ENCODE measurements at regions of chr13 and their contacts with region 1.

Region 1: GRCh38 chr13:106536244-106537034 is 977 bp upstream of the EFNB2 start:
- DNase-seq: peak; percentile 88 to 94
- ATAC-seq: peak; percentile 62 to 79 (median 68)
- H3K4me3 ChIP-seq: peak overlapping the region; percentile 75
- H3K27ac ChIP-seq: peak overlapping the region; percentile 78
- H3K4me1 ChIP-seq: no peaks in the 10 kb centered on the region
- H3K27me3 ChIP-seq: no peaks in the 10 kb centered on the region
- CTCF ChIP-seq: peak; percentile 99

Region 2: DNA sequence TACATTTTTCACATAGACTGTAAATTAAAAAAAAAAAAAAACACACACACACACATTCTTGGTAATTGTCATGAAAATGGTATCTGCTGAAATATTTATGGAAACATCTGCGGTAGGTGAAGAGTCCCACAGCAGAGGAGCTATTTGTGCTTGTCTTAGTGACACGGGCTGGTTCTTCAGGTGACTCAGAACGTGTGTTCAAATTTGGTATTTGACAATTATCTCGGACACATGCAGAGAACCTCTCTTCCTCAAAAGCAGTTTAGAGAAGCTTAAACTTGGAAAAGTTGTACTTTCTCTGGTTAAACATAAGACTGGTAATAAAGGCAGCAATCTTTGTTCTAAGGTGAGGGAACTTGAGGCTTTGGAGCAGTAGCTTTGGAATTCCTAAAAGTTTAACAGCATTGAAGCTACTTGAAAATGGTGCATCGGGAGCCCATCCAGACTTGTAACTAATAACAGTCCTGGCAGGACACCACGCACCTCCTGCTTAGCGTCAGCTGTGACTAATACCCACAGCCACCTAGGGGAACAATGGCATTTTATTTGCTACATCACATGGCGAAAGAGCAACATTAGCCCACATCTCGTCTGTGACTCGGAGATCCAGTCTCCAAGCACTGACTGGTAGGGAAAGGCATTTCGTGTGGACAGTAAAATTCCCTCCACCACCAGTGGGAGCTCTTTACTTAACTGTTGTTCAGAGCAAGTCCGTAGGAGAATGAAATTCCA is 1965.1 kb before region 1 on chr13:
- intact Hi-C with region 1: loop called (anchors 5 to 10 kb)
- DNase-seq: peak; percentile 28 to 56
- ATAC-seq: peak; percentile 86 to 99 (median 98)
- H3K4me3 ChIP-seq: no peak overlapping the region
- H3K27ac ChIP-seq: peak overlapping the region; percentile 2
- H3K4me1 ChIP-seq: peaks cover 4% of the 10 kb centered on the region
- H3K27me3 ChIP-seq: no peaks in the 10 kb centered on the region
- CTCF ChIP-seq: peak; percentile 65

Region 3: GRCh38 chr13:105406551-105406950 is 1129.9 kb before region 1 on chr13:
- intact Hi-C with region 1: loop called in 1 of 2 experiments (anchors 10 kb)
- DNase-seq: no peak
- ATAC-seq: no peak
- H3K4me3 ChIP-seq: no peak overlapping the region
- H3K27ac ChIP-seq: no peak overlapping the region
- H3K4me1 ChIP-seq: no peaks in the 10 kb centered on the region
- H3K27me3 ChIP-seq: no peaks in the 10 kb centered on the region
- CTCF ChIP-seq: no peak

Region 4: DNA sequence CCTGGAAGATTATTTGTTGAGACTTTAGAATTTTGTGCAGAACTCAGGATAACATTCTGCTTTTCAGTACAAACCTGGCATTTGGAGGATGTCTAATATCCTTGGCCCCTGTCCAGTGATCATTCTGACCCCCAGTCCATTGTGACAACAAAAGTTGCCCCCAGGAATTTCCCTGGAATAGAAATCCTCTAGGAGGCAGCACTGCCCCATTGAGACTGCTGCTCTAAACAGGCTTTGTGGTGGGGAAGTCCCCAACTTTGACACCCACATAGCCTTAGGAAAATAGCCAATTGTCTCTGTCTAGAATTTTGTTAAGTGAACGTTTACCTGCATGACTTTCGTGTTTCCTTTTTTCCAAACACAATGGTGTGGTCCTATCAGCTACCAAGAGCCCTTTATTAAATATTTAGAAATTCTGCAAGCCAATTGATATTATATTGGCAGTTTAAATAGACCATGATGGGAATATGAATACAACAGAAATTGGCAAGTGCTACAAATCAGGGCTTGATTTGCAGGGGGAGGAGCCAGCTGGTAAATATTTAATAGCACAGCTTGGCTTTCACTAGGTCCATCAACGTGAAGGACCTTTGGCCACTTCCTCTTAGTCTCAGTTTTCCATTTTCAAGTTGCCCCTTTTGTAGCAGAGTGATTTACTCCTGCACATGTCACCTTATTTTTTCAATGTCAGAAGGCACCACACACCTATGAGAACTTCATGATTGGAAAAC is 452.7 kb before region 1 on chr13:
- intact Hi-C with region 1: loop called in 1 of 2 experiments (anchors 5 kb)
- DNase-seq: no peak
- ATAC-seq: no peak
- H3K4me3 ChIP-seq: no peak overlapping the region
- H3K27ac ChIP-seq: no peak overlapping the region
- H3K4me1 ChIP-seq: no peaks in the 10 kb centered on the region
- H3K27me3 ChIP-seq: peaks cover 0 to 2% (median 0%) of the 10 kb centered on the region in 3 donors
- CTCF ChIP-seq: peak; percentile 43

Region 5: GRCh38 chr13:106349080-106349931 is 187.1 kb before region 1 on chr13:
- intact Hi-C with region 1: no loop called
- DNase-seq: no peak
- ATAC-seq: no peak
- H3K4me3 ChIP-seq: peak overlapping the region; percentile 41
- H3K27ac ChIP-seq: no peak overlapping the region
- H3K4me1 ChIP-seq: no peaks in the 10 kb centered on the region
- H3K27me3 ChIP-seq: peaks cover 2 to 21% (median 2%) of the 10 kb centered on the region in 3 donors
- CTCF ChIP-seq: no peak

Region 6: GRCh38 chr13:106401081-106401480 is 135.4 kb before region 1 on chr13:
- intact Hi-C with region 1: no loop called
- DNase-seq: no peak
- ATAC-seq: no peak
- H3K4me3 ChIP-seq: no peak overlapping the region
- H3K27ac ChIP-seq: no peak overlapping the region
- H3K4me1 ChIP-seq: no peaks in the 10 kb centered on the region
- H3K27me3 ChIP-seq: no peaks in the 10 kb centered on the region
- CTCF ChIP-seq: no peak

Region 7: DNA sequence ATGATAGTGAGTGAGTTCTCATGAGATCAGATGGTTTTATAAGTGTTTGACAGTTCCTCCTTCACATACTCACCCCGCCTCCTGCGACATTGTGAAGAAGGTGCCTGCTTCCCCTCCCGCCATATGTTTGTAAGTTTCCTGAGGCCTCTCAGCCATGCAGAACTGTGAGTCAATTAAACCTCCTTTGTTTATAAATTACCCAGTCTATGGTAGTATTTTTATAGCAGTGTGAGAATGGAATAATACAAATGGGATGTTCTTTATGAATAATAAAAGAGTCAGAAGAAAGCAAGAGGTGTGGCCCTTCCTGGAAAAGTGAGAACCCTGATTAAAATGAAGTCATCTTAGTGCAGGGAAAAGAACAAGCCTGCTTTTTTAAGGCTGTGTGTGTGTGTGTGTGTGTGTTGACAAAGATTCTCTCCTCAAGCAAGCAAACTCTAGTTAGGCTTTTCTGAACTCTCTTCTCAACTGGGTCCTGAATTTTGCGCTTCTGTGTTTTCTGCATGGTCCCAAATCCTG is 50.3 kb after region 1 on chr13:
- intact Hi-C with region 1: no loop called
- DNase-seq: no peak
- ATAC-seq: no peak
- H3K4me3 ChIP-seq: no peak overlapping the region
- H3K27ac ChIP-seq: no peak overlapping the region
- H3K4me1 ChIP-seq: no peaks in the 10 kb centered on the region
- H3K27me3 ChIP-seq: no peaks in the 10 kb centered on the region
- CTCF ChIP-seq: no peak

Region 8: DNA sequence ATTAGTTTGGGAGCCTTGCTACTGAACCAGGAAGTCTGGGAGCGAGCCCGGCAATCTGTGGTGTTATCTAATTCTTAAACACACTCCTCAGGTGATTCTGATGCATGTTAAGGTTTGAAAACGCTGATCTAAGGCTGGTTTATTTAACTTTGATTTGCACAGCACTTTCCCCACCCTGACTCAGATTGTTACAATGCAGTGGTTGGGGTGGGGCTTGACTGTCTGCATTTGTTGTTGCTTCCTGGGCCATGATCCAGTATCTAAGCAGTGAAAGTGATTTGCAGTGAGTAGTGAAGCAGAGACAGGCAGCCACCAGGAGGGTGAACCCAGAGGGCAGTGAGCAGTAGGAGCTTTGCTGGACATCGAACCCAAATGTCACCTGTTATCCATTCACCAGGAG is 113.1 kb after region 1 on chr13:
- intact Hi-C with region 1: no loop called
- DNase-seq: no peak
- ATAC-seq: no peak
- H3K4me3 ChIP-seq: no peak overlapping the region
- H3K27ac ChIP-seq: no peak overlapping the region
- H3K4me1 ChIP-seq: no peaks in the 10 kb centered on the region
- H3K27me3 ChIP-seq: no peaks in the 10 kb centered on the region
- CTCF ChIP-seq: no peak

Region 9: DNA sequence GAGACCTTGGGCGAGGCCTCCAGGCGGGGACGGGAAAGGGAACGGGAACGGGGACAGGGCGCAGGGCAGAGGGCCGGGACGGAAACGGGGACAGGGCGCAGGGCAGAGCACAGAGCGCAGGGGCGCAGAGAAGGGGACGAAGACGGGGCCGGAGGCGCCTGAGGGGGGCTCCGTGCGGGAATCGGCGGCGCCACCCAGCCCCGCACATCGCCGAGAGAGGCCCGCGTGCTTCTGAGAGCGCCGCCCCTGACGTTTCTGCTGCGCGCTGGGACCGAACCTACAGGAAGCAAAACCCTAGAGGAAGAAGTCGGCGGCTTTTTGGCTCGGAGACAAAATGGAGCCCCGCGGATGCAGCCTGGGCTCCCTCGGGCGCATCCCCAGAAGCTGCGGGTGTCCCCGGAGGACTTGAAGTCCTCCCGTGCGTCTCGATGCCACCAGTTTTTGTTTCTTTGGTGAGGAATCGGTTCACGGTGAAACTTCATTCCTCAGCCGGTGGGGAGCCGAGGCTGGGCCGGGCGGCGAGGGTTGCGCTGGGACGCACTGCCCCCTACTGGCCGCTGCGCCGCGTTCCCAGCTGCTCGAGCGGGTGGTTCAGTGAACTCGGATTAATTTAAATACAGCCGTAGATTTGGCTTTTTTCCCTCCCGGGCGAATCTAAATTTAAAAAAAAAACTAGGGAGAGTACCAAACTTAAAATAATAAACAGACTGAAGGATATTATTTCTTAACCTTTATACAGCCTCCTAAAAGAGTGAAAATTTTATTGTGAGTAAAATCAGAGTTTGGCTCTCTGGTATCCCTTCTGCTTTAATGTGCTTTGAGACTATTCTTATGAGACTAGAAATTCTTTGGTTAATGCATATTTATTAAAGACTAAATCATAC is 381.5 kb after region 1 on chr13:
- intact Hi-C with region 1: loop called in 1 of 2 experiments (anchors 5 kb)
- DNase-seq: peak; percentile 65 to 78
- ATAC-seq: peak; percentile 65 to 90 (median 80)
- H3K4me3 ChIP-seq: peak overlapping the region; percentile 67
- H3K27ac ChIP-seq: peak overlapping the region; percentile 81
- H3K4me1 ChIP-seq: no peaks in the 10 kb centered on the region
- H3K27me3 ChIP-seq: peaks cover 0 to 3% (median 0%) of the 10 kb centered on the region in 3 donors
- CTCF ChIP-seq: peak; percentile 79

Measured in psoas muscle (tissue), 8 donors.